B cell (primary cell): ENCODE measurements at regions of chr21 and their contacts with region 1.

Region 1: DNA sequence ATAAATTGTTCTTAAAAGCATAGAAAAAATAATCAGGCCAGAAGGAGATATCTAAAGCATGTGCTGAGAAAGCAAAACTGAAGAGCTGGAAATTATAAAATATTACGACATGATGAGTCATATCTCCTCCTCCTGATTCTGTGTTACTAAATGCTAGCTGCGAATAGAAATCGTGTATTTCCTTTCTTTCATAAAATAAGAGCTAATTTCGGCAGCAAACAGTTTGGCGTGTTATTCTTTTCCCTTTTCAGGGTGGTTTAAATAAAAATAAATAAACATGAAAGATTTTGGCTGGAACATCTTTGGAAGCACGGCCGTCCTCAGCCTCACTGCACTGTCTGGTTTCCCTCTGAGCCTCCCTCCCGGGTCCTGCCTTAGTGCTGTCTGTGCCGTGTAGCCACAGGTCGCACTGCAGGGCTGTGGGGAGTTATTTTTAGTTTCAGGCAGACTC is 56.0 kb downstream of the ADARB1 start:
- DNase-seq: no peak
- ATAC-seq: no peak
- H3K4me3 ChIP-seq: no peak overlapping the region
- H3K4me3 Mint-ChIP-seq: no peak overlapping the region
- H3K27ac ChIP-seq: no peak overlapping the region
- H3K27ac Mint-ChIP-seq: no peak overlapping the region
- H3K4me1 ChIP-seq: peaks cover 55 to 57% of the 10 kb centered on the region in 2 donors
- H3K4me1 Mint-ChIP-seq: peaks cover 62% of the 10 kb centered on the region
- H3K27me3 ChIP-seq: no peaks in the 10 kb centered on the region
- H3K27me3 Mint-ChIP-seq: no peaks in the 10 kb centered on the region
- CTCF ChIP-seq: no peak

Region 2: GRCh38 chr21:44939532-44940115 is 190.7 kb before region 1 on chr21 and contains the start of gene SLX9:
- CTCF ChIA-PET with region 1: interaction called, 423 read pairs
- POLR2A ChIA-PET with region 1: no interaction called
- intact Hi-C with region 1: no loop called
- DNase-seq: peak; percentile 84
- ATAC-seq: peak; percentile 87
- H3K4me3 ChIP-seq: peak within 1 kb of the TSS; percentile 54 to 80 (median 74)
- H3K4me3 Mint-ChIP-seq: peak within 1 kb of the TSS; percentile 89
- H3K27ac ChIP-seq: peak within 1 kb of the TSS in 1 of 2 donors; percentile 57
- H3K27ac Mint-ChIP-seq: peak within 1 kb of the TSS; percentile 86
- H3K4me1 ChIP-seq: peaks cover 26 to 40% of the 10 kb centered on the region in 2 donors
- H3K4me1 Mint-ChIP-seq: peaks cover 43% of the 10 kb centered on the region
- H3K27me3 ChIP-seq: no peaks in the 10 kb centered on the region
- H3K27me3 Mint-ChIP-seq: no peaks in the 10 kb centered on the region
- CTCF ChIP-seq: no peak
- total RNA-seq, gene SLX9: 12.6 and 15.9 TPM in 2 replicates

Region 3: GRCh38 chr21:44949779-44950198 is 180.6 kb before region 1 on chr21:
- CTCF ChIA-PET with region 1: interaction called, 423 read pairs
- POLR2A ChIA-PET with region 1: interaction called, 4 read pairs
- intact Hi-C with region 1: loop called (anchors 1 kb)
- DNase-seq: peak; percentile 85
- ATAC-seq: peak; percentile 84
- H3K4me3 ChIP-seq: no peak overlapping the region
- H3K4me3 Mint-ChIP-seq: no peak overlapping the region
- H3K27ac ChIP-seq: no peak overlapping the region
- H3K27ac Mint-ChIP-seq: peak overlapping the region; percentile 50
- H3K4me1 ChIP-seq: peaks cover 17 to 37% of the 10 kb centered on the region in 2 donors
- H3K4me1 Mint-ChIP-seq: peaks cover 27% of the 10 kb centered on the region
- H3K27me3 ChIP-seq: no peaks in the 10 kb centered on the region
- H3K27me3 Mint-ChIP-seq: no peaks in the 10 kb centered on the region
- CTCF ChIP-seq: peak; percentile 96

Region 4: DNA sequence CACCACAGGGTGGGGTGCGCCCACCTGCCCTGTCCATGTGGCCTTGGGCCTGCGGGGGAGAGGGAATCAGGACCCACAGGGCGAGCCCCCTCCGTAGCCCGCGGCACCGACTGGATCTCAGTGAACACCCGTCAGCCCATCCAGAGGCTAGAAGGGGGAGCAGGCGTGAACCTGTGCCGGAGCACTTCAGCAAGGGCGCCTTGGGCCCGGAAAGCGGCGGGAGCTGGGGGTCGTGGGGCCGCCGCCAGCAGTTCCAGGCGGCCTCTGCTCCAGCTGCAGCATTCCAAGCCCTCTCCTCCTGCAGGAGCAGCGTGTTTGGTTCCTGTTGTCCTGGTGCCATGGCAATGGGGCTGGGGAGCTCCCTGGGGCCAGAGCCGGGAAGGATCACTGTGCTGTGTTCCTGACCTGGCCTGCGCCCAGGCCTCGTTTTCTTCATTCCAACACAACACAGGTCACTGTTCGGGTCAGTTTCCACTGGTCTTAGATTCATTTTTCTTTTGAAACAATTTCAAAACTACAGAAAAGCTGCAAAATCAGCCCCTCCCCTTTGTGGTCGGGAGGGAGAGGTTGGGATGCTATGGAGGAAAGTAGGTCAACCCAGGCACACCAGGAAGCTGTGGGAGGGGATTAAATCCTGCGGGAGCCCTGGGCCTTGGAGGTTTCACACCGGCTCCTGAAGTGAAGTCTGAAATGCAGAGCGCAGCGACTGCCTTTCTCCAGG is 171.7 kb before region 1 on chr21:
- CTCF ChIA-PET with region 1: interaction called, 423 read pairs
- POLR2A ChIA-PET with region 1: no interaction called
- intact Hi-C with region 1: no loop called
- DNase-seq: no peak
- ATAC-seq: no peak
- H3K4me3 ChIP-seq: no peak overlapping the region
- H3K4me3 Mint-ChIP-seq: no peak overlapping the region
- H3K27ac ChIP-seq: no peak overlapping the region
- H3K27ac Mint-ChIP-seq: no peak overlapping the region
- H3K4me1 ChIP-seq: no peaks in the 10 kb centered on the region
- H3K4me1 Mint-ChIP-seq: peaks cover 3% of the 10 kb centered on the region
- H3K27me3 ChIP-seq: no peaks in the 10 kb centered on the region
- H3K27me3 Mint-ChIP-seq: no peaks in the 10 kb centered on the region
- CTCF ChIP-seq: no peak

Region 5: DNA sequence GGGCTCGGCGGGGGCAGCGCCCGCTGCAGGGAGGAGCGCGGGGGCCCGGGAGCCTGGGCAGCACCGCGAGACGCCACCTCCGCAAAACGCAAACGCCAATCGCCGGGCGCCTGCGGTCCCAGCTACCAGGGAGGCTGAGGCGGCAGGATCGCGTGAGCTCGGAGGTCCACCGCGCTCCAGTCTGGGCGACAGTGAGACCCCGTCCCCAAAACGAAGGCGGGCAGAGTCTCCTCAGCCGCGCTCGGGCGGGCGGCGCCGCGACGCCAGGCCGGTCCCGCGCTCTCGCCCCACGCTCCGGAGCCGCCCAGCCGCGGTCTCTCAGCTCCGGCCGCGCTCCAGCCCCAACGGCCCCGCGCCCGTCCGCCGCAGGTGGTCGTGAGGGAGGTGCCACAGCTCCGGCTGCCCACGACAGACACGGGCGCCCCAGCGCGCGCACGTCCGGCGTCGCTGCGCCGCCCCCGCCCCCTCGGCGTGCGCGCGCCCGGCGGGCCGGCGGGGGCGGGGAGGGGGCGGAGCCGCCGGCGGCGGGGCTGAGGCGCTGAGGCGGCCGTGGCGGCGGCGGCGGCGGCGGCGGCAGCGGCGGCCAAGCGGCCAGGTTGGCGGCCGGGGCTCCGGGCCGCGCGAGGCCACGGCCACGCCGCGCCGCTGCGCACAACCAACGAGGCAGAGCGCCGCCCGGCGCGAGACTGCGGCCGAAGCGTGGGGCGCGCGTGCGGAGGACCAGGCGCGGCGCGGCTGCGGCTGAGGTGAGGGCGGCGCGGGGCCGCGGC is 56.1 kb before region 1 on chr21 and contains the start of gene ADARB1:
- CTCF ChIA-PET with region 1: interaction called, 53 read pairs
- POLR2A ChIA-PET with region 1: no interaction called
- intact Hi-C with region 1: loop called (anchors 1 kb)
- DNase-seq: peak; percentile 84
- ATAC-seq: peak; percentile 87
- H3K4me3 ChIP-seq: peak within 1 kb of the TSS; percentile 69 to 86 (median 75)
- H3K4me3 Mint-ChIP-seq: peak within 1 kb of the TSS; percentile 90
- H3K27ac ChIP-seq: peak within 1 kb of the TSS in 1 of 2 donors; percentile 51
- H3K27ac Mint-ChIP-seq: peak within 1 kb of the TSS; percentile 84
- H3K4me1 ChIP-seq: peaks cover 37 to 44% of the 10 kb centered on the region in 2 donors
- H3K4me1 Mint-ChIP-seq: peaks cover 38% of the 10 kb centered on the region
- H3K27me3 ChIP-seq: no peaks in the 10 kb centered on the region
- H3K27me3 Mint-ChIP-seq: no peaks in the 10 kb centered on the region
- CTCF ChIP-seq: no peak
- total RNA-seq, gene ADARB1: 17.1 and 23.2 TPM in 2 replicates

Region 6: DNA sequence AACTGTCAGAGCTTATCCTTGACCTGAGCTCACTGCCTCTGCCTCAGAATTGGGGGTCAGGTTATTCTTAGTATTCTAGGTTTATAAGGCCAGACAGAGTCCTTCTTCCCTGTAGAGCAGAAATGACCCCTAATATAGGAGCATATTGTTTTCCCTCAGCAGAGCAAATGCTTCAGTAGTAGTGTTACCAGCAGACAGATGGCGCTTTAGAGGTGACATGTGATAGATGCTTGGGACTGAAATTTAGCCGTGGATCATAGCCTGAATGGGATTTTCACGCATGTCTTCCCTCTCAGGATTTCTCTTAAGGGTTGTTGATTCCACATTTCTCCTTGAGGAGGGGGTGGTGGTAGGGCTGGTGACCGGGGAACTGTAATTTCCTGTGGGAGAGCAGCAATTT is 31.5 kb before region 1 on chr21:
- CTCF ChIA-PET with region 1: interaction called, 235 read pairs
- POLR2A ChIA-PET with region 1: no interaction called
- intact Hi-C with region 1: loop called (anchors 1 kb)
- DNase-seq: peak; percentile 42
- ATAC-seq: no peak
- H3K4me3 ChIP-seq: no peak overlapping the region
- H3K4me3 Mint-ChIP-seq: peak overlapping the region; percentile 16
- H3K27ac ChIP-seq: peak overlapping the region in 1 of 2 donors; percentile 6
- H3K27ac Mint-ChIP-seq: peak overlapping the region; percentile 60
- H3K4me1 ChIP-seq: peaks cover 74 to 81% of the 10 kb centered on the region in 2 donors
- H3K4me1 Mint-ChIP-seq: peaks cover 77% of the 10 kb centered on the region
- H3K27me3 ChIP-seq: no peaks in the 10 kb centered on the region
- H3K27me3 Mint-ChIP-seq: no peaks in the 10 kb centered on the region
- CTCF ChIP-seq: peak; percentile 32

Region 7: DNA sequence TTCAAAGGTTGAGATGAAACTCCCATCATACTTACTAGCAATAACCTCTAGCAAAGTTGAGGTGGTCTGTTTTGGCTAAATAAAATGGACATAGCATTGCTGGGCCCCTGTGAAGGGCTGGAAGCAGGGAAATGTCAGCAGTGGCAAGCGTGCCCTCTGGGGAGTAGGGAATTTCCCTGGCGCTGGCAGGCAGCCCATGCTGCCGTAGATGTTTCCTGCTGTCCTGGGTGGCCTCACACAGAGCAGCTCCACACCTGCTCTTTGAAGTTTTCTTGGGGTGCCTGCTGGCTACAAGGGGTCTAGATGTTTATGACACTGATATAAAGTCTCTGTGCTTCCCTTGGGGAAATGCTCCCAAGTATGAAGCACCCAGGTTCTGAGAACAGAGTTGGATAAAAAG is 25.8 kb before region 1 on chr21:
- CTCF ChIA-PET with region 1: interaction called, 235 read pairs
- POLR2A ChIA-PET with region 1: interaction called, 5 read pairs
- intact Hi-C with region 1: loop called (anchors 1 kb)
- DNase-seq: peak; percentile 68
- ATAC-seq: peak; percentile 57
- H3K4me3 ChIP-seq: peak overlapping the region in 2 of 5 experiments; percentile 20
- H3K4me3 Mint-ChIP-seq: peak overlapping the region; percentile 72
- H3K27ac ChIP-seq: peak overlapping the region; percentile 67 to 81
- H3K27ac Mint-ChIP-seq: peak overlapping the region; percentile 28
- H3K4me1 ChIP-seq: peaks cover 79 to 80% of the 10 kb centered on the region in 2 donors
- H3K4me1 Mint-ChIP-seq: peaks cover 82% of the 10 kb centered on the region
- H3K27me3 ChIP-seq: no peaks in the 10 kb centered on the region
- H3K27me3 Mint-ChIP-seq: no peaks in the 10 kb centered on the region
- CTCF ChIP-seq: no peak

Region 8: GRCh38 chr21:45161038-45161945 is 30.9 kb after region 1 on chr21:
- CTCF ChIA-PET with region 1: no interaction called
- POLR2A ChIA-PET with region 1: no interaction called
- intact Hi-C with region 1: no loop called
- DNase-seq: no peak
- ATAC-seq: no peak
- H3K4me3 ChIP-seq: no peak overlapping the region
- H3K4me3 Mint-ChIP-seq: no peak overlapping the region
- H3K27ac ChIP-seq: no peak overlapping the region
- H3K27ac Mint-ChIP-seq: no peak overlapping the region
- H3K4me1 ChIP-seq: peaks cover 12 to 14% of the 10 kb centered on the region in 2 donors
- H3K4me1 Mint-ChIP-seq: peaks cover 24% of the 10 kb centered on the region
- H3K27me3 ChIP-seq: no peaks in the 10 kb centered on the region
- H3K27me3 Mint-ChIP-seq: no peaks in the 10 kb centered on the region
- CTCF ChIP-seq: no peak